Gastrocnemius medialis (tissue), 4 donors: ENCODE measurements at regions of chr12 and their contacts with region 1.

Region 1: DNA sequence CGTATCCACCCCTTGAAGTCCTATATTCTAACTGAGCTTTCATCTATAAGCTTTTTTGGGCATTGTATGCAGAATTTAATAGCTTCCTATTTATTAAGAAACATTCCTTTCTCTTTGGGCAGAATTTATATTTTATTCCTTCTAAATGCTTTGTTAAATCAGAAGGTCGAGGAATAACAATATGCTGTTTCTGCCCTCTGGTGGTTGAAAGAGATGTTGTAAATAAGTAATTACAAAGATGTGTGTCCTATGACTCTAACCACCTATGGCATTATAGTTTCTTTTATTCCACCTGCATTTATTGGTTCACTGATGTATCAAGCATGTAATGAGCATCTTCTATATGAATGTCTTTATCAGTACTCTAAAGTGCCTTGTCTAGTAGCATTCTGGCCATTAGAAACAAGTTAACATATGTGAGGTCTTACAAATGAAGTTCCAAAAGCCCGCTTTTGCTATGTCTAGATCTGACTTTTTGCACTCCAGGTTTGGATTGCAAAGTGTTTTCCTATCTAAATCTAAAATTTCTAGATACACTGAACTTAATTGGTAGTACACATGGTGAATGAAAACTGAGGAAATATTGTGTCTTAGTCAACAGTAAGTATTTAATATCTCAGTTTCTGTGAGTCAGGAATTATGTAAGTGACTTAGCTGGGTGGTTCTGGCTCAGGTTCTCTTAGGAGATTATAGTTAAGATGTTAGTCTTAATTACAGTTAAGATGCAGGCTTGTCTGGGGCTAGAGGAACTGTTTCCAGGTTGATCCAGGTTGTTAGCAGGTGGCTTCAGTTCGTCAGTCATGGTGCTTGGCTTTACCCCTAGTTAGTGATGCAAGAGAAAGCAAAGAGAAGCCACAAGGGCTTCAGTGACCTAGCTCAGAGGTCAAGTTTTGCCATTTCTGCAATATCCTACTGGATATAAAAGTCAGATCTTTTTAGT is 57.5 kb downstream of the PLEKHA5 start:
- DNase-seq: no peak
- ATAC-seq: no peak
- H3K4me3 ChIP-seq: peak overlapping the region in 1 of 4 donors; percentile 18
- H3K27ac ChIP-seq: no peak overlapping the region
- H3K4me1 ChIP-seq: no peaks in the 10 kb centered on the region
- H3K27me3 ChIP-seq: no peaks in the 10 kb centered on the region
- CTCF ChIP-seq: peak in 4 of 5 experiments; percentile 35 to 56 (median 44)
- POLR2A ChIP-seq: no peak

Region 2: GRCh38 chr12:18139989-18140596 is 1046.9 kb before region 1 on chr12:
- in situ Hi-C with region 1: loop called in 1 of 4 experiments (anchors 25 kb)
- intact Hi-C with region 1: no loop called
- DNase-seq: no peak
- ATAC-seq: no peak
- H3K4me3 ChIP-seq: no peak overlapping the region
- H3K27ac ChIP-seq: no peak overlapping the region
- H3K4me1 ChIP-seq: no peaks in the 10 kb centered on the region
- H3K27me3 ChIP-seq: no peaks in the 10 kb centered on the region
- CTCF ChIP-seq: peak in 4 of 5 experiments; percentile 14 to 42 (median 30)
- POLR2A ChIP-seq: no peak

Region 3: GRCh38 chr12:18250313-18250916 is 936.6 kb before region 1 on chr12:
- in situ Hi-C with region 1: loop called in 2 of 4 experiments (anchors 25 kb)
- intact Hi-C with region 1: no loop called
- DNase-seq: no peak
- ATAC-seq: no peak
- H3K4me3 ChIP-seq: no peak overlapping the region
- H3K27ac ChIP-seq: no peak overlapping the region
- H3K4me1 ChIP-seq: no peaks in the 10 kb centered on the region
- H3K27me3 ChIP-seq: no peaks in the 10 kb centered on the region
- CTCF ChIP-seq: peak in 3 of 5 experiments; percentile 19 to 50 (median 42)
- POLR2A ChIP-seq: no peak

Region 4: GRCh38 chr12:18430425-18431048 is 756.5 kb before region 1 on chr12:
- in situ Hi-C with region 1: loop called in 2 of 4 experiments (anchors 25 kb)
- intact Hi-C with region 1: loop called (anchors 5 kb)
- DNase-seq: no peak
- ATAC-seq: no peak
- H3K4me3 ChIP-seq: no peak overlapping the region
- H3K27ac ChIP-seq: no peak overlapping the region
- H3K4me1 ChIP-seq: no peaks in the 10 kb centered on the region
- H3K27me3 ChIP-seq: no peaks in the 10 kb centered on the region
- CTCF ChIP-seq: peak in 1 of 5 experiments; percentile 41
- POLR2A ChIP-seq: no peak

Region 5: GRCh38 chr12:18658829-18659228 is 528.2 kb before region 1 on chr12:
- in situ Hi-C with region 1: no loop called
- intact Hi-C with region 1: no loop called
- DNase-seq: no peak
- ATAC-seq: no peak
- H3K4me3 ChIP-seq: no peak overlapping the region
- H3K27ac ChIP-seq: no peak overlapping the region
- H3K4me1 ChIP-seq: no peaks in the 10 kb centered on the region
- H3K27me3 ChIP-seq: no peaks in the 10 kb centered on the region
- CTCF ChIP-seq: no peak
- POLR2A ChIP-seq: no peak

Region 6: GRCh38 chr12:18861287-18861858 is 325.6 kb before region 1 on chr12:
- in situ Hi-C with region 1: loop called in 2 of 4 experiments (anchors 25 kb)
- intact Hi-C with region 1: loop called (anchors 5 kb)
- DNase-seq: no peak
- ATAC-seq: no peak
- H3K4me3 ChIP-seq: no peak overlapping the region
- H3K27ac ChIP-seq: no peak overlapping the region
- H3K4me1 ChIP-seq: no peaks in the 10 kb centered on the region
- H3K27me3 ChIP-seq: no peaks in the 10 kb centered on the region
- CTCF ChIP-seq: no peak
- POLR2A ChIP-seq: no peak

Region 7: DNA sequence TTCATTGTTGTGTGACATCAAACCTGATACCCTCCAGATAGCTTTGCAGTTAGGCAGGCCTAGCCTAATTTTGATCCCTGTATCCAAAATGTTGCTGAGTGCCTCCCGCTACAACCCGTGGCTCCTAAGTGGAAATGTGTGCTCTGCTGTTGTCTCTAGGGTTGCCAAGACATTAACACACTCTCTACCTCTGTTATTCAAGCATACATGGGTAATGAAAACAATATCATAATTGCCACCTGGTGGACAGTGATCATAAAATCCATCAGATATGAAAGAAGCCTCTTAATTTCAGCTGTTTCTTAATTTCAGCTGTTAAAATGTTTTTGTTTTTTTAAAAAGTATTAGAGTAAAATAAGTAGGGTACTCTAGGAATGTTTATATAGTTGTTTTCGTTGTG is 36.0 kb after region 1 on chr12:
- in situ Hi-C with region 1: no loop called
- intact Hi-C with region 1: no loop called
- DNase-seq: no peak
- ATAC-seq: no peak
- H3K4me3 ChIP-seq: no peak overlapping the region
- H3K27ac ChIP-seq: no peak overlapping the region
- H3K4me1 ChIP-seq: no peaks in the 10 kb centered on the region
- H3K27me3 ChIP-seq: no peaks in the 10 kb centered on the region
- CTCF ChIP-seq: no peak
- POLR2A ChIP-seq: no peak

Region 8: GRCh38 chr12:19288603-19289244 is 101.7 kb after region 1 on chr12:
- in situ Hi-C with region 1: loop called in 1 of 4 experiments (anchors 25 kb)
- intact Hi-C with region 1: no loop called
- DNase-seq: no peak
- ATAC-seq: no peak
- H3K4me3 ChIP-seq: no peak overlapping the region
- H3K27ac ChIP-seq: no peak overlapping the region
- H3K4me1 ChIP-seq: no peaks in the 10 kb centered on the region
- H3K27me3 ChIP-seq: no peaks in the 10 kb centered on the region
- CTCF ChIP-seq: peak in 4 of 5 experiments; percentile 18 to 50 (median 30)
- POLR2A ChIP-seq: no peak

Region 9: DNA sequence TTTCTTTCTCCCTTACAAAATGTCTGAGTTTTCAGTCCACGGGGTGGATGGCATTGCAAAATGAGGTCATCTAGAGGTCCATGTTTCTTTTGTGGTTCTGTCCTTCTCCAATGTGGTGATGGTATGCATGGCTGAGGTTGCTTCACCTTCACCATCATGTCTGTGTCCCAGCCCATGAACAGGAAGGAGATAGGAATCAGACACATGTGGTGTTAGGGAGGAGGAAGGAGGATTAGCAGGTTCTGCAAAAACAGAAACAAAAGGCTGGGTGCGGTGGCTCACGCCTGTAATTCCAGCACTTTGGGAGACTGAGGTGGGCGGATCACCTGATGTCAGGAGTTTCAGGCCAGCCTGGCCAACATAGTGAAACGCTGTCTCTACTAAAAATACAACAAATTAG is 241.3 kb after region 1 on chr12:
- in situ Hi-C with region 1: no loop called
- intact Hi-C with region 1: no loop called
- DNase-seq: no peak
- ATAC-seq: no peak
- H3K4me3 ChIP-seq: no peak overlapping the region
- H3K27ac ChIP-seq: no peak overlapping the region
- H3K4me1 ChIP-seq: no peaks in the 10 kb centered on the region
- H3K27me3 ChIP-seq: no peaks in the 10 kb centered on the region
- CTCF ChIP-seq: no peak
- POLR2A ChIP-seq: no peak